PC-3 (cell line): ENCODE measurements at regions of chr12 and their contacts with region 1.

Region 1: DNA sequence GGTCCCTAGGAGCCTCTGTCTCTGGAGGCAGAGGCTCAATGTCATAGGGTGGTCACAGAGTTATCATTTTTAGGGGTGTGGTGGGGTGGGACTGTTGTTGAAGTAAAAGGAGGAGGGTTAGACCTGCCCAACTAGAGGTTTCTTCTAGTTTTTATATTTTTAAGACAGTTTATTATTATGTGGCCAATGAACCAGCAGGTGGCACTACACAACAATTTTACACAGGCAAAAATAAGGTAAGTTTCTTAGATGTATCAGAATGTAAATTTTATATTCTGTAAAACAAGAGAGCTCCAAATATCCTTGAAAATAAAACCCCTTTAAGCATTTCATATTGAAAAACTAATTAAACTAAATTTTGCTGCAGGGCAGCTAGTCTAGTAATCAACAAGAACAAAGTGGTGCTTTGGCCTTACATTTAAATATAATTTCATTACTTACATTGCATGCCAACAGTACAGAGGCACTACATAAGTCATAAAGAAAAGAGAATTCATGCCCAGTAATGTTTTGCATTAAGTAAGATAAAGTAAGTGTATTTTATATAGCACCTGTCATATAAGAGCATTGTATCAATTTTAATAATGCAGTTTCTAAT is 22.2 kb upstream of the OVCH1 start:
- DNase-seq: peak; percentile 86
- ATAC-seq: peak; percentile 15; the same call in 1 of the 2 replicates
- H3K4me3 ChIP-seq: no peak overlapping the region
- H3K27ac ChIP-seq: no peak overlapping the region
- H3K4me1 ChIP-seq: peaks cover 11% of the 10 kb centered on the region
- H3K27me3 ChIP-seq: no peaks in the 10 kb centered on the region
- CTCF ChIP-seq: peak; percentile 95

Region 2: DNA sequence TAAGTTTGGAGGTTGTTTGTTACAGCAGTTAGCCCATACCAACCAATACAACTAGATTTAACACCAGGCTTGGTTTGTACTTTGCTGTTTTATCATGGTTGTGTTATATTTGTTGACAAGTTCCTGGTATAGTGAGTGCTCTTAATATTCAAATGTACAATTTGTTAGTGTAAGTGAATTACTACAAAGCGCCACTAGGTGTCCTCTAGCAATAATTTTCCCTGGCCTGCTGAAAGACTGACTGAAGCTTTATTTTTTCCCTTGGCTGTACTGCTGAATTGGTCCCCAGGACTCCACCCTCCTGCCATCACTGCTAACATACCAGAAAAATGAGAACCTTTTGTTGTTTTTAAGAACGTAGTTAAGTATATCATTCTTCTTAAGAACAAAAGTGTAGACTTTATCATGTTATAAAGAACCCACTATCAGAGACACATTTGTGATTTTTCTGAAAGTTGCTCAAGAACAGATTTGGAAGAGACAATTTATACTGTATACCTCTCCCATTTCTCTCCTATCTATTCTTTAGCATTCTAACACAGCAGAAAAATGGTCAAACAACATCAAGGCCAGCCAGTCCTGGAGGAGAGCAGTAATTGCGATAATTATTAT is 445.9 kb before region 1 on chr12:
- CTCF ChIA-PET with region 1: interaction called, 6 read pairs
- POLR2A ChIA-PET with region 1: no interaction called
- intact Hi-C with region 1: loop called (anchors 2 kb)
- DNase-seq: peak; percentile 92
- ATAC-seq: peak; percentile 58
- H3K4me3 ChIP-seq: no peak overlapping the region
- H3K27ac ChIP-seq: peak overlapping the region; percentile 43
- H3K4me1 ChIP-seq: peaks cover 31% of the 10 kb centered on the region
- H3K27me3 ChIP-seq: no peaks in the 10 kb centered on the region
- CTCF ChIP-seq: peak; percentile 99

Region 3: DNA sequence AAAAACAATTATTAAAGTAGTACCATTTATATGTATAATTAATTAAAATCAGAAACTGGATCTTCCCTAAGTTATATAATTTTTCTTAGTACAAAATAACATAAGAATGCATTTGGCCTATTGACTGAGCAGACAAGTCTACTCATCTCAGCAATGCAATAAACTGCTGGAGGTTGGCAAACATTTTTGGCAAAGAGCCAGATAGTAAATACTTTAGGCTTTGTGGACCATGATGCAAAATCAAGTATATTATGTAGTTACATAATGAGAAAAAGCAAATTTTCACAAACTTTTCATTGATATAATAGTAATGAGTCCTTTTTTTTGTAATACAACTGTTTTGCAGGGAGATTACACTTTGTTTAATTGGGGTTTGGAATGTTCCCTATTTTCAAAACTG is 169.6 kb before region 1 on chr12:
- CTCF ChIA-PET with region 1: no interaction called
- POLR2A ChIA-PET with region 1: no interaction called
- intact Hi-C with region 1: loop called (anchors 1 kb)
- DNase-seq: peak; percentile 94
- ATAC-seq: peak; percentile 88
- H3K4me3 ChIP-seq: no peak overlapping the region
- H3K27ac ChIP-seq: no peak overlapping the region
- H3K4me1 ChIP-seq: peaks cover 11% of the 10 kb centered on the region
- H3K27me3 ChIP-seq: no peaks in the 10 kb centered on the region
- CTCF ChIP-seq: no peak

Region 4: GRCh38 chr12:29427964-29428363 is 91.7 kb before region 1 on chr12:
- CTCF ChIA-PET with region 1: interaction called, 3 read pairs
- POLR2A ChIA-PET with region 1: interaction called, 3 read pairs
- intact Hi-C with region 1: loop called (anchors 1 kb)
- DNase-seq: peak; percentile 53
- ATAC-seq: peak; percentile 6; the same call in 1 of the 2 replicates
- H3K4me3 ChIP-seq: no peak overlapping the region
- H3K27ac ChIP-seq: peak overlapping the region; percentile 28
- H3K4me1 ChIP-seq: peaks cover 56% of the 10 kb centered on the region
- H3K27me3 ChIP-seq: no peaks in the 10 kb centered on the region
- CTCF ChIP-seq: peak; percentile 56

Region 5: GRCh38 chr12:29534935-29535334 is 15.3 kb after region 1 on chr12:
- CTCF ChIA-PET with region 1: no interaction called
- POLR2A ChIA-PET with region 1: no interaction called
- intact Hi-C with region 1: no loop called
- DNase-seq: no peak
- ATAC-seq: no peak
- H3K4me3 ChIP-seq: no peak overlapping the region
- H3K27ac ChIP-seq: no peak overlapping the region
- H3K4me1 ChIP-seq: peaks cover 5% of the 10 kb centered on the region; the same call in 1 of the 2 replicates
- H3K27me3 ChIP-seq: peaks cover 18% of the 10 kb centered on the region
- CTCF ChIP-seq: no peak

Region 6: DNA sequence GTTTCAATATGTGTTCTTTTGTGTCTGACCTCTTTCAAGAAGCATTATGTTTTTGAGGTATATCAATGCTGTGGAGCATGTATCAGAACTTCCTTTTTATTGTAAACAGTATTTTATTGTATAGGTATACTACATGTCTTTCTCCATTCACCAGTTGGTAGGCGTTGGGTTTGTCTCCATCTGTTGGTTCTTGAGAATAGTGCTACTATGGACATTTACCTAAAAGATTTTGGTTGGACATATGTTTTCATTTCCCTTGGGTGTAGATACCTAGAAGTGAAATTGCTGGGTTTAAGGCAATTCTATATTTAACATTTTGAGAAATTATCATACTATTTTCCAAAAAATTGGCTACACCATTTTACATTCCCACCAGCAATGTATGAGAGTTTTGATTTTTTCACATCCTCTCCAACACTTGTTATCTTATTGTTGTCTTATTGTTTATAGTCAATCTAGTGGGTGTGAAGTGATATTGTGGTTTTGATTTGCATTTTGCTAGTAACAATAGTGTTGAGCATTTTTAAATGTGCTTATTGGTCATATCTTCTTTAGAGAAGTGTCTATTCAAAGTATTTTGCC is 766.8 kb after region 1 on chr12:
- CTCF ChIA-PET with region 1: no interaction called
- POLR2A ChIA-PET with region 1: no interaction called
- intact Hi-C with region 1: loop called (anchors 1 kb)
- DNase-seq: peak; percentile 59
- ATAC-seq: 0 out of 2 replicates have a peak, but pooled peaks have one; percentile 37
- H3K4me3 ChIP-seq: no peak overlapping the region
- H3K27ac ChIP-seq: no peak overlapping the region
- H3K4me1 ChIP-seq: no peaks in the 10 kb centered on the region
- H3K27me3 ChIP-seq: no peaks in the 10 kb centered on the region
- CTCF ChIP-seq: peak; percentile 68

Region 7: GRCh38 chr12:30806989-30807694 is 1287.5 kb after region 1 on chr12:
- CTCF ChIA-PET with region 1: no interaction called
- POLR2A ChIA-PET with region 1: no interaction called
- intact Hi-C with region 1: loop called (anchors 5 kb)
- DNase-seq: peak; percentile 80
- ATAC-seq: peak; percentile 93
- H3K4me3 ChIP-seq: peak overlapping the region; percentile 11; the same call in 1 of the 2 replicates
- H3K27ac ChIP-seq: no peak overlapping the region
- H3K4me1 ChIP-seq: peaks cover 14% of the 10 kb centered on the region
- H3K27me3 ChIP-seq: no peaks in the 10 kb centered on the region
- CTCF ChIP-seq: peak; percentile 81